BJ (cell line): ENCODE measurements at regions of chr11 and their contacts with region 1.

Region 1: DNA sequence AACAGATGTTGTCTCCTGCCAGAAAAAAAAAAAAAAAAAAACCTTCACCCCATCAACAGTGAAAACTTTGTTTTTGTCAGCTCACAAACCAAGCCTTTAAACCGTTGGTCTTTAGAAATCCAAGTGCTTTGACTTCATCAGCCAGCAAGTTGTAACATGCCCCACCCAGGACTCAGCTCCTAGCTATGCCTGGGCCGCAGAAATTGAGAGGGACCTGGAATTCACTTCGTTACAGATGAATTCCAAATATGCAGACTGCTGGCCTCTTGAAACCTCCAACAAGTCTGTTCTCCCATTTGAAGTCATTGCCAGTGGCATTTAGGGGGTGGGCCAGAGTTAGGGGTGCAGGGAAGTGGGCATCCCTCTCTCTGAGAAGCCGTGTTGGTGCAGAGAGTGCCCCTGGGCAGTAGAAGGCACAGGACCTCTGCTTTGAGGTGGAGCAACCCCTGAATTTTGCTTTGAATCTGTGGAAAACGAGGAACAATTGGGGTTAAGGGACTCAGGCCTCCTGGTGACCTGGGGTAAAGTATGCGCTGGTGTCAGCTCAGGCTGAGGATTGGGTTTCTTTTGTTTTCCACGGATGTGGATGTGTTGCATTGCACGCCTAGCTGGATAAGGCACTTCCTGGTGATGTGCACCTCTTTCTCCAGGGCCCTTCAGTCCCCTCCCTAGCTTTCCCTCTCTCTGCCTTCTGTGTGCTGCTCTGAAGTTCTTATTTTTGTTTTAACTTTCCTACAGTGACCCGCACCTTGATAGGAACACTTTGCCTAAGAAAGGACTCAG is 109.5 kb downstream of the DBX1 start:
- DNase-seq: peak; percentile 39
- H3K4me3 ChIP-seq: no peak overlapping the region
- H3K27me3 ChIP-seq: no peaks in the 10 kb centered on the region
- CTCF ChIP-seq: no peak

Region 2: GRCh38 chr11:20080032-20080685 is 29.4 kb after region 1 on chr11:
- CTCF ChIA-PET with region 1: no interaction called
- POLR2A ChIA-PET with region 1: interaction called, 14 read pairs
- DNase-seq: no peak
- H3K4me3 ChIP-seq: no peak overlapping the region
- H3K27me3 ChIP-seq: no peaks in the 10 kb centered on the region
- CTCF ChIP-seq: no peak